ENCODE measurements at regions of chr13 and their contacts with region 1.

Region 1: GRCh38 chr13:40613192-40613818 is 53.1 kb downstream of the FOXO1 start:
- DNase-seq: peak; percentile 26 to 83 (median 58)
- ATAC-seq: peak; percentile 74 to 86 (median 80)
- H3K4me3 ChIP-seq: peak overlapping the region; percentile 35 to 48
- H3K4me3 Mint-ChIP-seq: peak overlapping the region; percentile 73 to 81 (median 78)
- H3K27ac ChIP-seq: peak overlapping the region; percentile 89
- H3K27ac Mint-ChIP-seq: peak overlapping the region; percentile 83 to 89
- H3K4me1 ChIP-seq: peaks cover 51 to 65% of the 10 kb centered on the region in 2 experiments
- H3K4me1 Mint-ChIP-seq: peaks cover 84 to 98% (median 96%) of the 10 kb centered on the region in 3 donors
- H3K27me3 ChIP-seq: no peaks in the 10 kb centered on the region
- H3K27me3 Mint-ChIP-seq: no peaks in the 10 kb centered on the region

Region 2: GRCh38 chr13:40340368-40341095 is 272.8 kb before region 1 on chr13:
- CTCF ChIA-PET with region 1: interaction called in 1 of 2 experiments, 10 read pairs
- POLR2A ChIA-PET with region 1: no interaction called
- DNase-seq: no peak
- ATAC-seq: no peak
- H3K4me3 ChIP-seq: no peak overlapping the region
- H3K4me3 Mint-ChIP-seq: no peak overlapping the region
- H3K27ac ChIP-seq: no peak overlapping the region
- H3K27ac Mint-ChIP-seq: no peak overlapping the region
- H3K4me1 ChIP-seq: peaks cover 0 to 10% of the 10 kb centered on the region in 2 experiments
- H3K4me1 Mint-ChIP-seq: peaks cover 18 to 29% (median 20%) of the 10 kb centered on the region in 3 donors
- H3K27me3 ChIP-seq: no peaks in the 10 kb centered on the region
- H3K27me3 Mint-ChIP-seq: no peaks in the 10 kb centered on the region